ENCODE measurements at regions of chr19 and their contacts with region 1.

Region 1: DNA sequence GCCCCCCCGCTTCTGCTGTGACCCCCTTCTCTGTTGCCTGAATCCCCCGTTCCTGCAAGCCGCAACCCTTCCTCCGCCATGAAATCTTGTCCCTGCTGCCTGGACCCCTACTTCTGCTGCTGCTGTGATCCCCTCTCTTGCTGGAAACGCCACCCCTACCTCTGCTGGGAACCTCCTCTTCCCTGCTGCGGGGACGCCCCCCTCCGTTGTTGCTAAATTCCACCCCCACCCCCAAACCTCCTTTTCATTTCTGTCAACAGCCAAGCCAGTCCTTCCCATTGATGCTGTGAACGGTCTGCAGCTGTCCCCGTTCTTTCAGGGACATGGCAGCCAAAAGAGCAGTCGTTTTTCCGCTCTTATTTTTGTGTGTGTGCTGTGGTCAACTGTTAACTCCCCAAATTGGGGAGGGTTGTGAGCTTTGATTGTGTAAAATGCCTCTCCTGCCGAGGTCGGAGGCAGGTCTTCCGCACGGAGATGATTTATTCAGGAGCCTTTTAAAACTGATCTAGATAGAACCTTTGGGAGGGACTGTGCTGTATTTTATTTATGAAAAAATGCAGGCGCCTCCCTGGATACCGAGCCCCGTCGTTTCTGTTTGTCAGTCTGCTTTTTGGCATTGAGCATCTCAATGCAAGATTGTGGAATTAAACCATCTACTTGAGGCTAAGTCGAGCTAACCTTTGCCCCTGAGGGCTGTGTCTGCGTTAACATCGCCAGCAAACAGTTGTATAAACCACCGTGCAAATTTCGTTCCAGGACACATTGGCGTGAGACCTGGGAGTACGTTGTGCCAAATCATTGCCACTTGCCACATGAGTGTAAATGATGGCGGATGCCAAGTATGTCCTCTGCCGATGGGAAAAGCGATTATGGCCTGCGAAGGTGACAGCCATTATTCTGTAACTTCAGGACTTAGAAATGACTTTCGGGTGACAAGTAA is 27.9 kb upstream of the NDUFS7 start:
- DNase-seq: peak in 9 of 10 donors; percentile 35 to 92 (median 52)

Region 2: DNA sequence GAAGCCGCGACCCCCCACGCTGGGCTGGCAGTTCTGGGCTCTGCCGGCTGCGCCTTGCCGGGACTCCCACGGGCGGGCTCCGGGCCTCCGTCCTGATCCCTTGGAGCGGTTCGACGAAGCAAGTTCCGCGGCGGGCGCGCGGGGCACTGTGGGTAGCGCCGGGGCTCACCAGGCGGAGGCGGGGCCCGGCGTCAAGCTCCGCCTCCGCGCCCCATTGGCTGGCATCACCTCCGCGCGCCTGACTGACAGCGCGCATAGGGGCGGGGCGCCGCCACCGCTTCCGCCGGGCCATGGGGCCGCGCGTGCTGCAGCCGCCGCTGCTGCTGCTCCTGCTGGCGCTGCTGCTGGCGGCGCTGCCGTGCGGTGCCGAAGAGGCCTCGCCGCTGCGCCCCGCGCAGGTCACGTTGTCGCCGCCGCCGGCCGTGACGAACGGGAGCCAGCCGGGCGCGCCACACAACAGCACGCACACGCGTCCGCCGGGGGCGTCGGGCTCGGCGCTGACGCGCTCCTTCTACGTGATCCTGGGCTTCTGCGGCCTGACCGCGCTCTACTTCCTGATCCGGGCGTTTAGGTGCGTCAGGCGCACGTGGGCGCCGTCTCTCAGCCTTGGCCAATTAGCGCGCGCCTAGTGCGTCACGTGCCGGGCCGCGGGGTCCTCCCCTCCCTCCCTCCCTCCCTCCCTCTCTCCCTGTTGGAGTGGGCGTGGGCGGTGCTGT is 80.4 kb before region 1 on chr19 and contains the start of gene FAM174C:
- intact Hi-C with region 1: loop called (anchors 5 kb)
- DNase-seq: peak; percentile 89 to 99 (median 96)

Region 3: GRCh38 chr19:1315470-1316231 is 40.2 kb before region 1 on chr19:
- intact Hi-C with region 1: loop called (anchors 5 kb)
- DNase-seq: peak; percentile 55 to 96 (median 72)

Region 4: DNA sequence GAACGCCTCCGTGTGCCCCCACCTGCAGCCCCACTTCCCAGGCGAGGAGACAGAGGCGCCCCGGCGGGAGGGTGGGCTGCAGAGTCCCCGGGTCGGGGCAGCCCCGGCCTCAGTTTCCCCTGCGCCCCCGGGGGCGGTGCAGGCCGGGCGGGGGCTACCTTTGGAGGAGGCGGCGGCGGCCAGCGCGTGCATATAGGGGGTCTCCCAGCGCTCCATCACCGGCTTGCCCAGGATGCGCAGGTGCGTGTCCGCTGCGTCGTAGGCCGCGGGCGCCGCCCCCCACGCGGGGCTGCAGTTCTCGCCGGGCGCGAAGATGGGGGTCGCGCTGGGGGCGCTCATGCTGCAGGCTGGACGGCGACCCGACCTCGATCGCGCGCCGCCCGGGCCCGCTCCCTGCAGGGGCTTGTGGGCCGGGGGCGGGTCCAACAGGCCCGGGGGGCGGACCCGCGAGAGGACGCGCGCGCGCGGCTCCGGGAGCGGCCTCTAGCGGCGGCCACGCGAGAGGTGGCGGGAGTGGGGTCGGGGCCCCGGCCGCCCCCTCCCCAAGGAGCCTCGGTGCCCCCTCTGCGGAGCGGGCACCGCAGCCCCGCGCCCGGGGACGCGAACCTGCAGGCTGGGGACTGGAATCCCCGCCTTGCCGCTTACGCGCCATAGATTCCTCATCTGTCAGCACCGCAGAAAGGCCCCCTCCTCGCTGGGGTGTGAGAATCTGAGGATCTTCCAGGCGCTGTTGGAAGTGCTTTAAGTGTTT is 45.5 kb after region 1 on chr19 and contains the start of gene GAMT:
- intact Hi-C with region 1: loop called (anchors 5 kb)
- DNase-seq: peak in 5 of 10 donors; percentile 59 to 95 (median 85)